Ascending aorta (tissue), 2 donors: ENCODE measurements at regions of chr19 and their contacts with region 1.

Region 1: GRCh38 chr19:52296773-52297600 is at the start of gene ZNF480:
- DNase-seq: peak; percentile 26 to 87
- H3K4me3 ChIP-seq: peak within 1 kb of the TSS; percentile 77 to 84
- H3K27ac ChIP-seq: peak within 1 kb of the TSS; percentile 91 to 94
- H3K4me1 ChIP-seq: peaks cover 0 to 4% of the 10 kb centered on the region in 2 donors
- H3K27me3 ChIP-seq: no peaks in the 10 kb centered on the region
- CTCF ChIP-seq: no peak
- total RNA-seq, gene ZNF480: 4.4 TPM

Region 2: GRCh38 chr19:52095172-52096014 is 201.6 kb before region 1 on chr19 and contains the start of gene ZNF841:
- intact Hi-C with region 1: loop called (anchors 1 kb)
- DNase-seq: peak; percentile 85 to 97
- H3K4me3 ChIP-seq: peak within 1 kb of the TSS; percentile 91 to 95
- H3K27ac ChIP-seq: peak within 1 kb of the TSS; percentile 75 to 87
- H3K4me1 ChIP-seq: no peaks in the 10 kb centered on the region
- H3K27me3 ChIP-seq: no peaks in the 10 kb centered on the region
- CTCF ChIP-seq: no peak
- total RNA-seq, gene ZNF841: 6.9 TPM

Region 3: DNA sequence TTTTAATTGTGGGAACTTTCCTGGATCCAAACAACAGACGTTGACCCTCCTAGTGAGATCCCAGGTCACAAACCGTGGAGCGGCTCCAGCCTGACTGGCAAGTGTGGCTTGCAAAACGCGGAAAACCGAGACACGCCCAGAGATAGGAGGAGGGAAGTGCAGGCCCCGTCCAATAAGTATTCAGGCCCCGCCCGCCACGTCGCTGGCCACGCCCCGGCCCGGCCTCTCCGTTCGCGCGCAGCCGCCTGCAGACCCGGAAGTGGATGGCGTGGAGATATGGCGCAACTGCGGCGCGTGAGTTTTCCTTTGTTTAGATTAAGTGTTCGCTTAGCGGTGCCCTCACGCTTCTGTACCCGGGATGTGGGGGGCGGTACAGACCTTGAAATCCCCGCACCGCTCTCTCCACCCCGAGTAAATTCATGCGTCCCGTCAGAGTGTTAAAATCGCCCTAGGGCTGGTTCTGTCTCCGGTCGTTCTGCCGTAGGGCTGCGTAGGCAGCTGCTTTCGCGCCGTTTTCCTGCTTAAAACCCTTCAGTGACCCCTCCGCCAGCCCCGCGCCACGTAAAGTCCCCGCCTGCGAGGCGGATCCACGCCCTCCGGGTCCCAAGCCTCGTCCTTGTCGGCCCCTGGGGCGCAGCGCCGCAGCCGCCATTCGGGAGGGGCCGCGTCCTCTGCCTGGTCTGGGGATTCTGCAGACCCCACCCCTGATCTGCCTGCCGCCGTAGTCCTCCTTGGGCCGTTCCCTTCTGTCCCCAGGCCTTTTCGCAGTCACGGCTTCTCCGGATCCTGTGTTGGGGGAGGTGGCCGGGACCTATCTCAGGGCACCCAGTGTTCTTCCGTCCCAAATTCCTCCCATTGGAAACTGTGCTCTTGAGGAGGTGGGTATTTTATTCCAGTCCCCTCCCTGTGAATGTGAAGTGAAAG is 27.4 kb before region 1 on chr19 and contains the start of gene ZNF766:
- intact Hi-C with region 1: loop called (anchors 1 kb)
- DNase-seq: peak; percentile 89 to 99
- H3K4me3 ChIP-seq: peak within 1 kb of the TSS; percentile 92 to 99
- H3K27ac ChIP-seq: peak within 1 kb of the TSS; percentile 98
- H3K4me1 ChIP-seq: peaks cover 5 to 14% of the 10 kb centered on the region in 2 donors
- H3K27me3 ChIP-seq: no peaks in the 10 kb centered on the region
- CTCF ChIP-seq: no peak
- total RNA-seq, gene ZNF766: 2.3 TPM

Region 4: DNA sequence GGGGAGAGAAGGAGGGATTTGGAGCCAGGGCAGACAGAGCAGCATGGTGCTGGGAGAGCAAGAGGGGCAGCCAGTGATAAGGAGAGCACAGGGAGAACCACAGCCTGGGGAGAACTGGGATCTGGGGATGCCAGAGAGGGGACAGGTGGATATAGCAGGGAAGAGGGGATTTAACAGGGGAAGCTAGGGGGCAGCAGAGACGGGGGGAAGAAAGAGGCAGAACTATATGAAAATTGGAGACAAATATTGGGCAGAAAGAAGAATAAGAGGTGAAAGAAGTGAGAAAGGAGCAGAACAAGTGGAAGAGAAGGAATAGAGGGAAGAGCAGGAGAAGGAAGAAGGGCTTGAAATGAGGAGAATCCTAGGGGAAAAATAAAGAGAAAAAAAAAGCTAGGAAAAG is 94.1 kb after region 1 on chr19:
- intact Hi-C with region 1: no loop called
- DNase-seq: no peak
- H3K4me3 ChIP-seq: no peak overlapping the region
- H3K27ac ChIP-seq: no peak overlapping the region
- H3K4me1 ChIP-seq: no peaks in the 10 kb centered on the region
- H3K27me3 ChIP-seq: no peaks in the 10 kb centered on the region
- CTCF ChIP-seq: no peak